ENCODE measurements at regions of chr5 and their contacts with region 1.

Region 1: DNA sequence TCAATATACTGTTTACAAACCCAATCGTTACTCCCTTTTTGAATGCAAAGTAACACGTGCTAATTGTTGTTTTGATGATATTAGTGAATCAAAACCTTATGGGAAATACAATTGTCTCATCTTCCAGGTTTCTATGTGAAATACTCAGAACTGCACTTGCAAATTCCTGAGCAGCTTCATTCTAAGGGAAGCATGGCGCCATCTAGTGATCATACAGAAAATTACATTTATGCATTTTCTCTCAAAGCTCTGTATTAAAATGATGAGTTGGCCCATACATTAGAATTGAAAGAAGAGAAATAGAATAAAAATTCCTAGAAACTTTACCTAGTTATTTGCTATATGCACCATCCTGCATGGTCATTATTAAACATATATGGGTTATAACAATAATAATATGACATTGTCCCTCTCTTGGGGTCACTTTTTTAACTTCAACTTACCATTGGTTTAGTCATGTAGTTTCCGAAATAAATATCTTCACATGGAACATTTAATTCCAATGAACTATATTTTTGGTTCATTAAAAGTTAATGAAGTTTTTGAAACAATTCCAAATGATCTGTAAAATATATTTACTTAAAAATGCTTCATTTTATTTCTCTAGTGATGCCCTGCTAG is 220.0 kb downstream of the PDE4D start:
- DNase-seq: peak in 3 of 14 experiments; percentile 34 to 59 (median 46)
- ATAC-seq: no peak
- H3K4me3 ChIP-seq: no peak overlapping the region
- H3K4me3 Mint-ChIP-seq: no peak overlapping the region
- H3K27ac ChIP-seq: no peak overlapping the region
- H3K27ac Mint-ChIP-seq: no peak overlapping the region
- H3K4me1 ChIP-seq: no peaks in the 10 kb centered on the region
- H3K4me1 Mint-ChIP-seq: no peaks in the 10 kb centered on the region
- H3K27me3 ChIP-seq: no peaks in the 10 kb centered on the region
- H3K27me3 Mint-ChIP-seq: peaks cover under 1% of the 10 kb centered on the region
- CTCF ChIP-seq: peak; percentile 97

Region 2: GRCh38 chr5:58871648-58872242 is 801.8 kb before region 1 on chr5:
- CTCF ChIA-PET with region 1: no interaction called
- POLR2A ChIA-PET with region 1: no interaction called
- intact Hi-C with region 1: loop called in 1 of 2 experiments (anchors 5 kb)
- DNase-seq: peak in 6 of 14 experiments; percentile 11 to 55 (median 32)
- ATAC-seq: no peak
- H3K4me3 ChIP-seq: no peak overlapping the region
- H3K4me3 Mint-ChIP-seq: no peak overlapping the region
- H3K27ac ChIP-seq: no peak overlapping the region
- H3K27ac Mint-ChIP-seq: no peak overlapping the region
- H3K4me1 ChIP-seq: no peaks in the 10 kb centered on the region
- H3K4me1 Mint-ChIP-seq: no peaks in the 10 kb centered on the region
- H3K27me3 ChIP-seq: peaks cover 0 to 4% of the 10 kb centered on the region in 2 experiments
- H3K27me3 Mint-ChIP-seq: peaks cover 19% of the 10 kb centered on the region
- CTCF ChIP-seq: peak; percentile 90

Region 3: DNA sequence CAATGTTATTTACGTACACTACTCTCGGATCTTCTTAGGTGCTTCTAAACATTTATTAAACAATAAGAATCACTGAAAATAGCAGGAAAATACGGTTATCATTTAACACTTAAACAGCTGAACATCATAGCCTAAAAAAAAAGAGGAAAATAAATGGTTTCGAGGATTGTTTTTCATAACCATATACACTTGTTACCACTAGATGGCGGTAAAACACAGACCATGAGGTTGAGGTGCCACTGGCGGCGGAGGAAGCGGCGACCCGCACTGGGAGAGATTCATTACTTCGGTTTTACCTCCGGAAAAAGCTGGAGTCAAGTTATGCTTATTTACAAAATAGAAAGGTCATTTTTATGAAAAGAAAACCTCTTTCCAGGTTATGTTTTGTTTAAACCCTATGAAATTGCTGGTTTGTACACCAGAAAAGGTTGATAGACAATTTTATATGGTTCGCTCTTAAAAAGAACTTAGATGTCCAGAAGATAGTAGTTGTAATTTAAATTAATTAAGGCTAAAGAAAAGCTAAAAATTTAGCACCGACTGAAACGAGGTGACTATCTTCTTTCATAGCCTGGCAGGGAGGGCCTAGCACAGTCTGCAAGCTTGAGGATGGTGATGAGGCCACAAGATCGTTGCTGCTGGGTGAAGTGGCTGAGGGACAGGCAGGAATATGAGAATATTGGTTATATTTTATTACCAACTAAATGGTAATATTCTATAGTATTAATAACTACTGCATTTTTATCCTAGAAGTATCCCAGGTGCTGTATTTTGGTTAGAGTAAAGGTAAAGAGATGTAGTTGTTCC is 484.9 kb before region 1 on chr5:
- CTCF ChIA-PET with region 1: no interaction called
- POLR2A ChIA-PET with region 1: no interaction called
- intact Hi-C with region 1: loop called (anchors 2 kb)
- DNase-seq: peak; percentile 26 to 81 (median 48)
- ATAC-seq: peak; percentile 69
- H3K4me3 ChIP-seq: no peak overlapping the region
- H3K4me3 Mint-ChIP-seq: no peak overlapping the region
- H3K27ac ChIP-seq: no peak overlapping the region
- H3K27ac Mint-ChIP-seq: no peak overlapping the region
- H3K4me1 ChIP-seq: no peaks in the 10 kb centered on the region
- H3K4me1 Mint-ChIP-seq: peaks cover 5% of the 10 kb centered on the region
- H3K27me3 ChIP-seq: peaks cover 0 to 5% of the 10 kb centered on the region in 2 experiments
- H3K27me3 Mint-ChIP-seq: peaks cover 19% of the 10 kb centered on the region
- CTCF ChIP-seq: peak; percentile 95

Region 4: GRCh38 chr5:59356813-59357380 is 316.7 kb before region 1 on chr5:
- CTCF ChIA-PET with region 1: no interaction called
- POLR2A ChIA-PET with region 1: no interaction called
- intact Hi-C with region 1: no loop called
- DNase-seq: peak in 1 of 14 experiments; percentile 3
- ATAC-seq: no peak
- H3K4me3 ChIP-seq: no peak overlapping the region
- H3K4me3 Mint-ChIP-seq: no peak overlapping the region
- H3K27ac ChIP-seq: no peak overlapping the region
- H3K27ac Mint-ChIP-seq: no peak overlapping the region
- H3K4me1 ChIP-seq: no peaks in the 10 kb centered on the region
- H3K4me1 Mint-ChIP-seq: no peaks in the 10 kb centered on the region
- H3K27me3 ChIP-seq: no peaks in the 10 kb centered on the region
- H3K27me3 Mint-ChIP-seq: peaks cover 15% of the 10 kb centered on the region
- CTCF ChIP-seq: no peak

Region 5: GRCh38 chr5:59390074-59390659 is 283.4 kb before region 1 on chr5:
- CTCF ChIA-PET with region 1: no interaction called
- POLR2A ChIA-PET with region 1: no interaction called
- intact Hi-C with region 1: loop called (anchors 2 to 10 kb)
- DNase-seq: peak in 4 of 14 experiments; percentile 16 to 48 (median 24)
- ATAC-seq: no peak
- H3K4me3 ChIP-seq: no peak overlapping the region
- H3K4me3 Mint-ChIP-seq: no peak overlapping the region
- H3K27ac ChIP-seq: no peak overlapping the region
- H3K27ac Mint-ChIP-seq: no peak overlapping the region
- H3K4me1 ChIP-seq: no peaks in the 10 kb centered on the region
- H3K4me1 Mint-ChIP-seq: no peaks in the 10 kb centered on the region
- H3K27me3 ChIP-seq: no peaks in the 10 kb centered on the region
- H3K27me3 Mint-ChIP-seq: peaks cover 4% of the 10 kb centered on the region
- CTCF ChIP-seq: peak; percentile 89

Region 6: GRCh38 chr5:60287174-60287771 is 613.7 kb after region 1 on chr5:
- CTCF ChIA-PET with region 1: no interaction called
- POLR2A ChIA-PET with region 1: no interaction called
- intact Hi-C with region 1: no loop called
- DNase-seq: peak in 3 of 14 experiments; percentile 7 to 45 (median 36)
- ATAC-seq: no peak
- H3K4me3 ChIP-seq: no peak overlapping the region
- H3K4me3 Mint-ChIP-seq: no peak overlapping the region
- H3K27ac ChIP-seq: no peak overlapping the region
- H3K27ac Mint-ChIP-seq: no peak overlapping the region
- H3K4me1 ChIP-seq: no peaks in the 10 kb centered on the region
- H3K4me1 Mint-ChIP-seq: no peaks in the 10 kb centered on the region
- H3K27me3 ChIP-seq: no peaks in the 10 kb centered on the region
- H3K27me3 Mint-ChIP-seq: no peaks in the 10 kb centered on the region
- CTCF ChIP-seq: no peak